Activated CD4-positive, alpha-beta T cell treated with anti-CD3 and anti-CD28 coated beads, Interleukin-2, amount 10 ng/mL, durations not matched to agents 24 days and 14 days (primary cell): ENCODE measurements at regions of chr1 and their contacts with region 1.

Region 1: GRCh38 chr1:89820422-89821321 is at the start of gene LRRC8D:
- DNase-seq: peak; percentile 92
- H3K4me3 Mint-ChIP-seq: peak within 1 kb of the TSS; percentile 84
- H3K27ac Mint-ChIP-seq: peak within 1 kb of the TSS; percentile 82
- H3K4me1 Mint-ChIP-seq: peaks cover 29% of the 10 kb centered on the region
- H3K27me3 Mint-ChIP-seq: peaks cover 19% of the 10 kb centered on the region
- total RNA-seq, gene LRRC8D: 43.6 and 44.9 TPM in 2 replicates

Region 2: DNA sequence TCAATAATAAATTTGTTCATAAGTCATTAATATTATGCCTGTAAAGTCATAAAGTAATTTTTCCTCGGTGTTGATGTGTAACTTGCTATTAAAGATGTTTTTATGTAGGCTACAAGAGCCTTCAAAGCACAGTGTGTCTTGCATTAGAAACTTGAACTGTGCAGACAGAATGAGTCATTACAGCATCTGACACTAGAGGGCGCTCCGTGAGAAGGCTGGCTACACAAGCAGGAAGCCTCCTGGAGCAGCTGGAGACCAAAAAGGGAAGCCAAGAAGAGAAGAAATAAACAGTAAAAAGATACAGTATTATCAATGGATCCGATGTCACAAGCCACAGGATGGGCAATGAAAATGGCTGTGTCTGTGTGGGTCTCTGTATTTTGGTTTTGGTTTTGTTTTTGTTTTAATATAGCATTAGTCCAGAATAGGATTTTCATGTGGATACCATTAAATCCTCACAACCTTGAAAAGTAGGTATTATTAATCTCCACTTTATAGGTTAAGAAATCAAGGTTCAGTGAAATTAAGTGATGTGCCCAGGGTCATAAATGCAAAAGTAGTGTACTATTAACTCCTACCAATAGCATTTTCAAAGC is 15.9 kb before region 1 on chr1:
- intact Hi-C with region 1: loop called (anchors 2 kb)
- DNase-seq: peak; percentile 95
- H3K4me3 Mint-ChIP-seq: no peak overlapping the region
- H3K27ac Mint-ChIP-seq: no peak overlapping the region
- H3K4me1 Mint-ChIP-seq: peaks cover 8% of the 10 kb centered on the region
- H3K27me3 Mint-ChIP-seq: peaks cover 7% of the 10 kb centered on the region

Region 3: GRCh38 chr1:89994805-89995597 is 174.3 kb after region 1 on chr1 and contains the start of gene ZNF326:
- intact Hi-C with region 1: loop called (anchors 1 kb)
- DNase-seq: peak; percentile 99
- H3K4me3 Mint-ChIP-seq: peak within 1 kb of the TSS; percentile 94
- H3K27ac Mint-ChIP-seq: peak within 1 kb of the TSS; percentile 98
- H3K4me1 Mint-ChIP-seq: peaks cover 35% of the 10 kb centered on the region
- H3K27me3 Mint-ChIP-seq: peaks cover 6% of the 10 kb centered on the region
- total RNA-seq, gene ZNF326: 36.8 and 38.1 TPM in 2 replicates

Region 4: GRCh38 chr1:90236493-90236892 is 415.8 kb after region 1 on chr1:
- intact Hi-C with region 1: no loop called
- DNase-seq: peak; percentile 40
- H3K4me3 Mint-ChIP-seq: no peak overlapping the region
- H3K27ac Mint-ChIP-seq: no peak overlapping the region
- H3K4me1 Mint-ChIP-seq: no peaks in the 10 kb centered on the region
- H3K27me3 Mint-ChIP-seq: peaks cover 1% of the 10 kb centered on the region